ENCODE measurements at regions of chr3 and their contacts with region 1.

Region 1: DNA sequence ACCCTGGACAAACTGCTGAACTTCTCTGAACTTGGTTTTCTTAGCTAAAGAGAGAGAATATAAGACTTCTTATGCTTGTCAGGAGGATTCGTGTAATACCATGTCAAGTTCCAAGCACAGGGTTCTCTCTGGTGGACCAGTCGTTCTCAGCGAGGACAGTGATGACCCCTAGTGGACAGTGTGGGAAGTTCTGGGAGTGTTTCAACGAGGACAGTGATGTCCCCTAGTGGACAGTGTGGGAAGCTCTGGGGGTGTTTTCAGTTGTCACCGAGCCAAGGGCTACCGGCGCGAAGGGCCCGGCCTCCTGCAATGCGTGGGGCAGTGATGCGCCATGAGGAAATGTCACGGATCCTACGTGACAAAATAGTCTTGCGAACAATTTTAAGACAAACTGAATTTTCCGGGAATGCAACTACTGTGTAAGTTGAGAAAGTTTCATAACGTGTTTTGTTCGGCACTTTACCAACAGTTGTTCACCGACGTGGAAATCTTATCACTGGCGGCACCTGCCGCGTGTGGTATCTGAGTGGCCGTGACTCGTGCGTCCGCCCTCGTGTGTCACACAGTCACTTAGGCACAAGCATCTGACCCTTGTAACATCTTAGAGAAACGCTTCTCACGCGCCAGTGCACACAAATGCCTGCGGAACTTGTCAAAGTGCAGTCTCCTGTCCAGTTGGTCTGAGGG is 39.3 kb upstream of the MUC4 start:
- DNase-seq: peak; percentile 61 to 95 (median 84)
- H3K4me3 ChIP-seq: peak overlapping the region in 26 of 59 donors; percentile 3 to 52 (median 29)
- H3K27ac ChIP-seq: no peak overlapping the region
- H3K27me3 ChIP-seq: no peaks in the 10 kb centered on the region
- CTCF ChIP-seq: peak; percentile 97 to 100 (median 100)

Region 2: DNA sequence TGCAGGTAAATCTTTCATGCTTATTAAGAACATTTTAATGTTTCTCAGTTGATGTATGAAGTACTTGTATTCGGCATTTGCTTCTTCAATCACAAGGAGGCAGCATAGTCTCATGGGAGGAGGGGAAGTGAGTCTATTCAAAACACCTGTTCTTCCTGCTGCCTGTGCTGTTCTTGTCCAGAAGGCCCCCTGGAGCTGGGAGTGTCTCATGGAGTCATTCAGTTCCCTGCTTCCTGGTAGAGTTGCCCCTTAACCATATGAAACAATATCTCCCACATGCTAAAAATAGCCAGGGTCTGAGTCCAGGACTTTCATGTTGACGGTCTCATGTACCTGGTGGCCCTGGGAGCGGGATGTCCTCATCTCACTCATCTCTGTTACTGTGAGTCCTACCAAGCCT is 292.4 kb before region 1 on chr3:
- intact Hi-C with region 1: loop called (anchors 5 to 10 kb)
- DNase-seq: no peak
- H3K4me3 ChIP-seq: no peak overlapping the region
- H3K27ac ChIP-seq: no peak overlapping the region
- H3K27me3 ChIP-seq: no peaks in the 10 kb centered on the region
- CTCF ChIP-seq: peak in 45 of 56 donors; percentile 8 to 58 (median 38)

Region 3: DNA sequence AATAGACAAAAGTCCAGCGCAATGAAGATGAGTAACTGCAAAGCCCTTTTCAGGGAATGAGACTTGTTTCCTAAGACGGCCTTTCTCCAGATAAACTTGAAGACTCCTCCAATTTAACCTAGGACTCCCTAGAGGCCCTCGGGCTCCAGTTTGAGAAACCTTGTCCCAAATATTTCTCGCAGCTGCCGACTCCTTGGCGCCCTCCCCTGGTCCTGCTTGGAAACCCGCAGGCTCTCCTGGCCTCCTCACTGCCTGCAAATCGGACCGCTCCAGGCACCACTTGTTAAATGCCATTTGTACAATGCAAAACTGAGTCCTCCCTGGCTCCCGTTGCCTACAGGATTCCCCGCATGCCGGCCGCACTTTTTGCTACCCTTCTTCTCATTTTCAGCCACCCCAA is 76.1 kb before region 1 on chr3:
- intact Hi-C with region 1: no loop called
- DNase-seq: peak in 1 of 10 donors; percentile 16
- H3K4me3 ChIP-seq: no peak overlapping the region
- H3K27ac ChIP-seq: no peak overlapping the region
- H3K27me3 ChIP-seq: peaks cover 0 to 5% (median 0%) of the 10 kb centered on the region in 45 donors
- CTCF ChIP-seq: peak in 43 of 56 donors; percentile 13 to 53 (median 37)

Region 4: DNA sequence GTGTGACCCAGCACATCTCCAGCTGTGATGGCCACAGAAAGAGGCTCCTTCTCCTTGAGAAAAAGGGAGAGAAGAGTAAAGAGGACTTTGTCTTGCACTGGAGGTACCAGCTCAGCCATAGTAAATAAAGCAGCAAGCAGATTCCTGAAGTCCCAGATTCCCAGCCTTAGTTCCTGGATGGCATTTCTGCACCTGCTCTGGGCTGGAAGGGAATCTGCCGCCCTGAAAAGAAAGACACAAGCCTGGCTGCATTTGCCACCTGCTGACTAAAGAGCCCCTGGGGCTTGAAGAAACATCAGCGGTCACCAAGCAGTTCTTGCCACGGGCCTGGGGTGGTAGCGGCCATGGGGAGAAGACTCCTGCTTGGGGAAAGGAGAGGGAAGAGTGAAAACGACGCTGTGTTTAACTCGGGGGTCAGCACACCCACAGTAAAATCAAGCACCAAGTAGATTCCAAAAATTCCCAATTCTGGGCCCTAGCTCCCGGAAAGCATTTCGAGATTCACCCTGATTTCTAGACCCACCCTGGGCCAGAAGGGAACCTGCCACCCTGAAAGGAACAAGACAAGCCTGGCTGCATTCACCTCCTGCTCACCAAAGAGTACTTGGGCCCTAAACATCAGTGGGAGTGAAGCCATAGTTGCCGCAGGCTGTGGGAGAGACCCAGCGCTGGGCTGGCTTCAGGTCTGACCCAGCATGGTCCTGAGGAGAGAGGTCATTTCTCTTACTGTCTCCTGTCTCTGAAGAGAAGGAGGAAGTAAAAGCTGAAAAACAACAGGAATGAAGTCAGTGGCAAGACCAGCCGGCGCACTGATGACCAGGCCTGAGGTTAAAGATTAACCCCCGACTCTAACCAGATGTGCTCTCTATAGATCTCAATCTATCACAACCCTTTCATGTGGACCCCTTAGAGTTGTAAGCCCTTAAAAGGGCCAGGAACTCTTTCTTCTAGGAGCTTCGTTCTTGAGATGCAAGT is 81.7 kb after region 1 on chr3:
- intact Hi-C with region 1: no loop called
- DNase-seq: peak in 1 of 10 donors; percentile 2
- H3K4me3 ChIP-seq: no peak overlapping the region
- H3K27ac ChIP-seq: peak overlapping the region in 37 of 59 donors; percentile 1 to 82 (median 61)
- H3K27me3 ChIP-seq: no peaks in the 10 kb centered on the region
- CTCF ChIP-seq: no peak

Measured in dorsolateral prefrontal cortex (tissue), 120 donors.